Mammary epithelial cell (primary cell): ENCODE measurements at regions of chr6 and their contacts with region 1.

Region 1: DNA sequence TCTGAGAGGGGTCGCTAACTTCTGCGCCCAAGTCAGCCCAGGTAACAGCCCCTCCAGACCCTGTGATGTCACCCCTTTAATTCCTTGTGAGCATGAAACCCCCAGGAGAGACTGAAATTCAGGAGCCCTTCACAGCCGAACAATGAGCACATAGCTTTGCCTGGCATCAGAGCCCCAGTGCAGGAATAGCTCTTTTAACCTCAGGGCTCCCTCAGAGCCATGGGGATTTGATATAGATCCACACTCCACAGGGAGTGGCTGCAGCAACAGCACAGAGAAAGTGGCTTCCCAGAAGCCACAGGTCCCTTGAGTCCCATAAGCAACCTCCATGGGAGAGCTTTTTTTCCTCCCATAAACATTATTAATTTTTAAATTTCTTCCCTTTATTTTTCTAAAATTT is 150.0 kb upstream of the MARCKS start:
- DNase-seq: no peak
- H3K4me3 ChIP-seq: no peak overlapping the region
- H3K27ac ChIP-seq: no peak overlapping the region
- H3K4me1 ChIP-seq: no peaks in the 10 kb centered on the region
- H3K27me3 ChIP-seq: no peaks in the 10 kb centered on the region
- CTCF ChIP-seq: no peak

Region 2: DNA sequence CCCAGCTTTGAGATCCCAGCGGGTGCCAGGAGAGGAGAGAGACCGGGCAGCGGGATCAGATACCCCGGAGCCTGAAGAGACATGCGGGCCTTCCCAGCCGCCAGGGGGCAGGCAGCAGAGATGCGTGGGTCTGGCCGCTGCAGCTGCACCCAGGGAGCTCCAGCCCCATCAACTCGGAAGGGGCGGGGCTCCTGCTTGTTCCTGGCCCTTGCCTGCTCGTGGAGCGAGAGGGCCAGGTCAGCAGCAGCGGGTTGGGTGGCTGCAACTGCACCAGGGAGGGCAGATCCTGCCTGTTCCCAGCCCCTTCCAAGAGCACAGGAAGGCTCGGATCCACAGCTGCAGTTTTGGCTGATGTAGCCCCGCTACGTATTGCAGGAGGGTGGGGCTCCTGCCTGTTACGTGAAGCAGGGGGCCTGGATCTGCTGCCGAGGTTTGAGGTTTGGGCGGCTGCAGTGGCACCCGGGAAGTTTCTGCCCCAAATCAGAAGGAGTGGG is 827.2 kb before region 1 on chr6:
- CTCF ChIA-PET with region 1: no interaction called
- dilution Hi-C with region 1: no loop called
- in situ Hi-C with region 1: no loop called
- intact Hi-C with region 1: loop called (anchors 5 kb)
- DNase-seq: no peak
- H3K4me3 ChIP-seq: no peak overlapping the region
- H3K27ac ChIP-seq: no peak overlapping the region
- H3K4me1 ChIP-seq: peaks cover 10% of the 10 kb centered on the region
- H3K27me3 ChIP-seq: no peaks in the 10 kb centered on the region
- CTCF ChIP-seq: no peak

Region 3: DNA sequence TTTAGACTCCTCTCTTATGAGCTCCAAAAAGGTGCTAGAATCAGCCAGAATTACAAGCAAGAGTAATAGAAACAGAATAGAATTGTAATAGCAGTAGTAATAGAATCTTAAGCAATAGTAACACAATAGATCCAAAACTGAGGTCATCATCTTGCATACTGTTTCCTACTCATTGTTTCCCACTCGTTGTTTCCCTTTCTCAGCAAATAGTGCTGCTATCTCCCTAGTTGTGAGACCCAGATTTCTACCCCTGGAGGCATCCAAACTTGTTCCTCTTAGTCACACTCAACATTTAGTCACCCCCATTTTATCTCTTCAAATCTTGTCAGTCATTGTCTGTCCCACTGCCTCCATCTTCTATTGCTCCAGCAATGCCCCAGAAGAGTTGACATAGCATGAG is 207.0 kb before region 1 on chr6:
- CTCF ChIA-PET with region 1: no interaction called
- dilution Hi-C with region 1: no loop called
- in situ Hi-C with region 1: no loop called
- intact Hi-C with region 1: no loop called
- DNase-seq: peak; percentile 12
- H3K4me3 ChIP-seq: no peak overlapping the region
- H3K27ac ChIP-seq: no peak overlapping the region
- H3K4me1 ChIP-seq: peaks cover 3% of the 10 kb centered on the region
- H3K27me3 ChIP-seq: no peaks in the 10 kb centered on the region
- CTCF ChIP-seq: no peak